HEK293 (cell line): ENCODE measurements at regions of chr2 and their contacts with region 1.

Region 1: DNA sequence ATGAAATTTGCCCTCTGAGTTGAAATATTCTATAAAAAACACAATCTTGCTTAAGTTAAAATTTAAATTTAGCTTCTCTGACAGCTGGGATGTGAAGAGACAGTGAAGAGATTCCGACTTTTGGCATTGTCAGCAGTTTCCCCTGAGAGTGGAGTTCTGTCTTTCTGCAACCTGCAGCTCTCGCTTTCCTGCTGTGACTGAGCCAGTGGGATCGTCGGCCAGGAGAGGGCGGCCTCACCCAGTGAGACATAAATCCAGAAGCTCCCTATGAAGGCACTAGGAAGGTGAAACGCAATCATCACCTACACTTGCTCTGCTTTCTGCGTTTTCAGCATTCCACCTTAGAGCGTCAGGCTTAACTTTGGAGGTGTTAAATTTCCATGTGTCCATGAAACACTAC is 75.4 kb upstream of the HNMT start:
- H3K4me3 ChIP-seq: no peak overlapping the region
- H3K27ac ChIP-seq: no peak overlapping the region
- H3K4me1 ChIP-seq: 0 out of 2 replicates have a peak, but pooled peaks cover 2% of the 10 kb centered on the region
- CTCF ChIP-seq: peak; percentile 41

Region 2: GRCh38 chr2:137865954-137866540 is 22.8 kb before region 1 on chr2:
- CTCF ChIA-PET with region 1: interaction called, 36 read pairs
- POLR2A ChIA-PET with region 1: no interaction called
- H3K4me3 ChIP-seq: no peak overlapping the region
- H3K27ac ChIP-seq: no peak overlapping the region
- H3K4me1 ChIP-seq: no peaks in the 10 kb centered on the region
- CTCF ChIP-seq: peak; percentile 43; the same call in 1 of the 2 replicates

Region 3: GRCh38 chr2:137872577-137872976 is 16.3 kb before region 1 on chr2:
- CTCF ChIA-PET with region 1: interaction called, 48 read pairs
- POLR2A ChIA-PET with region 1: no interaction called
- H3K4me3 ChIP-seq: no peak overlapping the region
- H3K27ac ChIP-seq: no peak overlapping the region
- H3K4me1 ChIP-seq: 0 out of 2 replicates have a peak, but pooled peaks cover 5% of the 10 kb centered on the region
- CTCF ChIP-seq: no peak

Region 4: DNA sequence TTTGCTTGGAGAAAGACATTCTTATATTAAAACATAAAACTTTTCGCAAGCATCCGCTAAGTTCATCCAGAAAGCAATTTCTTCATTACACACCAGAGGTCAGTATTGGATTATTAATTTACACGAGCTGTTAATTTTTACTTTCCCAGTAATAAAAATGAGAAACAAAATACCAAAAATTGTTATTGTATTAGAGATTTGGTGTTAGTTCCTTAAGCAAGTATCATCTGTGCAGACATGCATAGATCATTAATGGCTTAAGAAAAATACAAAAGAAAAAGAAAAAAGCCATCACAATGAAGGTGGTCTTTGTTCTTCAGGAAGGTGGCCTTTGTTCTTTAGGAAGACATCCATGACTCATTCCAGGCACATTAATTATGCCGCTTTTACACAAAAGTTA is 21.8 kb after region 1 on chr2:
- CTCF ChIA-PET with region 1: interaction called, 13 read pairs
- POLR2A ChIA-PET with region 1: no interaction called
- H3K4me3 ChIP-seq: no peak overlapping the region
- H3K27ac ChIP-seq: no peak overlapping the region
- H3K4me1 ChIP-seq: no peaks in the 10 kb centered on the region
- CTCF ChIP-seq: no peak

Region 5: DNA sequence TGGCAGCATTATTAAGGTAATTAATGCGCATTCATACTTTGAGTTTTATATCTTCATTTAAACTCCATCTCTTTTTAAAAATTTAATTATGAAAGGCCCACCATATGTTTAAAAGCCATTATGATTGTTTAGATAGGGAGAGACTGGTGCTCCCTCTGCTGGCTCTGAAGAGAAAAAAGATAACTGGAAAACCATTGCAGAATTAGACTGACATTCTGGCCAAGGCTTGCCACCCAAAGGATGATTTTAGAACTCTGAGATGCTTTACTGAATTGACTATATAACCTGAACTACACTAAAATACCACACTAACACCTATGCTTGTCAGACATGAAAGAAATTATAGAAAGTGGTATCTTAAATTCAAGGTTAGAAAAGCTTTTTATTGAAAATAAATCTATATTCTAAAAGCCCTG is 485.2 kb after region 1 on chr2:
- CTCF ChIA-PET with region 1: interaction called, 10 read pairs
- POLR2A ChIA-PET with region 1: no interaction called
- H3K4me3 ChIP-seq: no peak overlapping the region
- H3K27ac ChIP-seq: no peak overlapping the region
- H3K4me1 ChIP-seq: no peaks in the 10 kb centered on the region
- CTCF ChIP-seq: no peak